GM13977 (cell line): ENCODE measurements at regions of chr6 and their contacts with region 1.

Region 1: GRCh38 chr6:27157459-27158315 is 89.8 kb upstream of the PRSS16 start:
- DNase-seq: no peak
- CTCF ChIP-seq: peak; percentile 64

Region 2: DNA sequence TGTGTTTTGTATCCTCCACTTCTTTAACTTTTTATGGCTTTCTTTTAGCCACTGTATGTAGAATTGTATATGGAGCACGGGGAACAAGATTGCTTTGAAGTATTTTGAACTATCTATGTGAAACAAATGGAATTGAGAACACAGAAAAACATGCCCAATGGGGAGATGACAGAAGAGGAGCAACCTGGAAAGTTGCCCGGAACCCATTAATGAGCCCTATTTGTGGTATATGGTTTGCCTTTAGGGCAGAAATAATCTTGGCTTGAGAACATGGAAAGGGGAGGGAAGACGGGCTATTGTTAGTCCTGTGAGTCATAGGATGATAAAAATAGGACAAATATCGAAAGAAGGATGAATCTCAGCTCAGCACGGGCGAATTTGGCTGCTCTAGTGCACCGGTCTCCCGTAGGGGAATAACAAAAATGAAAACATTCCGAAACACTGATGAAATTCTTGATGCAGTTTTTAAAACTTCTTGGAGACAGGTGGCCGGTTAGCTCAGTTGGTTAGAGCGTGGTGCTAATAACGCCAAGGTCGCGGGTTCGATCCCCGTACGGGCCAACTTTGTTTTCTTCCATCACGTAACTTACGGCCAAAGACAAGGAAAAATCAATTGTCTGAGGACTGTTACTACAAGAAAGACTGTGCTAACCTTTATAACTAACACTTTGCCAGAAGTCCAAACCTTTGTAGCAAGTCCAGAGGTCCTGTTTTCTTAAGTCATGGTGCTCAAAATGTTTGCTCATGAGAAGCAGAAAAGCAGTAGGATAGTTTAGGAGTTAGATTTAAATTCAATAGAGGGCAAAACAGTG is 603.8 kb before region 1 on chr6:
- in situ Hi-C with region 1: no loop called
- DNase-seq: peak; percentile 48
- CTCF ChIP-seq: no peak

Region 3: DNA sequence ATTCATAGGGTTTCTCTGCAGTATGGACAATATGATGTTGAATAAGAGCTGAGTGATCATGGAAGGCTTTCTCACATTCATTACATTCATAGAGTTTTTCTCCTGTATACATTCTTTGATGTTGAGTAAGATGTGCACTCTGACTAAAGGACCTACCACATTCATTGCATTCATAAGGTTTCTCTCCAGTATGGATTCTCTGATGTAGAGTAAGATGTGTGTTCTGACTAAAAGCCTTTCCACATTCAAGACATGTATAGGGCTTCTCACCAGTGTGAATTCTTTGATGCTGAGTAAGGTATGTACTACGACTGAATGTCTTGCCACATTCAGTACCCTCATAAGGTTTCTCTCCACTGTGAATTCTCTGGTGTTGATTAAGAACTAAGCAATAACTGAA is 201.5 kb after region 1 on chr6:
- in situ Hi-C with region 1: no loop called
- DNase-seq: no peak
- CTCF ChIP-seq: no peak

Region 4: DNA sequence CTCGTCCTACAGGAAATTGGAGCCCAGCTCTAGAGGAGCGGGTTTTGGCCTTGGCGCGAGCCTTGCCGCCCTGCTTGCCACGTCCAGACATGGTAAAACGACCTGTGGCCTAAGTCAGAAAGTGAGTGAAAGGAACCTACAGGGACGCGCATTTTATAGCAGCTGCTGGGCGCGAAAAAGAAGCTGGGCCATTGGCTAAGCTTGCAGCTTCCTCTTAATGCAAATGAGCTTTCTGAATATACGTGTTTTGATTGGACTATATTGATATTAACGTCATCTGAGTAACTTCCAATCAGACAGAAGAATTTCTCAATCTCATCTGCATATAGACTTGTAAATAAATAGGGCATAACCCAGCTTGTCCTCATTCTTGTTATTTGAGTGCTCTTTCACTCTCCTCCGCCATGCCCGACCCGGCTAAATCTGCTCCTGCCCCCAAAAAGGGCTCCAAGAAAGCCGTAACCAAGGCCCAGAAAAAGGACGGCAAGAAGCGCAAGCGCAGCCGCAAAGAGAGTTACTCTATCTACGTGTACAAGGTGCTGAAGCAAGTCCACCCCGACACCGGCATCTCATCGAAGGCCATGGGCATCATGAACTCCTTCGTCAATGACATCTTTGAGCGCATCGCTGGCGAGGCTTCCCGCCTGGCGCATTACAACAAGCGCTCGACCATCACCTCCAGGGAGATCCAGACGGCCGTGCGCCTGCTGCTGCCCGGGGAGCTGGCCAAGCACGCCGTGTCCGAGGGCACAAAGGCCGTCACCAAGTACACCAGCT is 735.6 kb after region 1 on chr6:
- in situ Hi-C with region 1: loop called (anchors 10 kb)
- DNase-seq: peak; percentile 89
- CTCF ChIP-seq: no peak